PC-3 (cell line): ENCODE measurements at regions of chr3 and their contacts with region 1.

Region 1: DNA sequence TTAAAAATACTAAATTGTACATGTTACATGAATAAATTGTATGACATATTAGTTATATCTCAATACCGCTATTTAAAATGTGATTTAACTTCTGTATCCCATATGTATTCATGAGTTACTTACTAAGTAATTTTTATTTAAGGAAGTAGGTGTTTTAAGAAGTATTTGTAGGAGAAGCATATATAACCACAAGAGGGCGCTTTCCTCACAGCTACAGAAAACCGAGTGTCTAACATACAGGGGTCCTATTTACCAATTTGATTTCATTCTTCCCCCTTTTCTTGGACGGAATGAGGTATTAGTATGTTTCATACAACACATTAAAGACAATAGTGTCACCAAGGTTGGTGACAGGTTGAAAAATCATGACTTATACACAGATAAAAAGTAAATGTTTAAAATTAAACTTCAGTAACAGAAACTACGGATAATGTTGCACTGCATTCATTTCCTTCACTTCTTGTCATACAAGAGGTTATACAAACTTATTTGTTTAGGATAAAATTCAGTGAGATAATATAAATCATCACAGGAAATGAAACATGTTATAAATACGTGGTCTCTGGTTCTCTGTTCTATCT is 253.6 kb downstream of the MAGI1 start:
- DNase-seq: peak; percentile 41
- ATAC-seq: no peak
- H3K4me3 ChIP-seq: no peak overlapping the region
- H3K27ac ChIP-seq: no peak overlapping the region
- H3K4me1 ChIP-seq: no peaks in the 10 kb centered on the region
- H3K27me3 ChIP-seq: no peaks in the 10 kb centered on the region
- CTCF ChIP-seq: peak; percentile 68

Region 2: DNA sequence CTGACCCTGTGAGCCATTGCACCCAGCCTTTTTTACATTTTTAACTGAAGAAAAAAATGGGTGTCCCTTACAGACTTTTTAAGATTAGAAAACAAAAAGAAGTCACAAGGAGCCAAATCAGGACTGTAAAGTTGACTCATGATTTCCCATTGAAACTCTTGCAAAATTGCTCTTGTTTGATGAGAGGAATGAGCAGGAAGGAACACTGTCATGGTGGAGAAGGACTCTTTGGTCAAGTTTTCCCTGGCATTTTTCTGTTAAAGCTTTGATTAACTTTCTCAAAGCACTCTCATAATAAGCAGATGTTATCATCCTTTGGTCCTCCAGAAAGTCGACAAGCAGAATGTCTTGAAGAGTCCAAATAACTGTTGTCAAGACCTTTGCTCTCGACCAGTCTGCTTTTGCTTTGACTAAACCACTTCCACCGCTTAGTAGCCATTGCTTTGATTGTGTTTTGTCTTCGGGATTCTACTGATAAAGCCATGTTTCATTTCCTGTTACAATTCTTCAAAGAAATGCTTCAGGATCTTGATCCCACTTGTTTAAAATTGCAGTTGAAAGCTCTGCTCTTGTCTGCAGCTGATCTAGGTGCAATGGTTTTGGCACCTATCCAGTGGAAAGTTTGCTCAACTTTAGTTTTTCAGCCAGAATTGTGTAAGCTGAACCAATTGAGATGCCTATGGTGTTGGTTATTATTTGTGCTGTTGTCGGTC is 115.8 kb before region 1 on chr3:
- CTCF ChIA-PET with region 1: no interaction called
- POLR2A ChIA-PET with region 1: no interaction called
- intact Hi-C with region 1: no loop called
- DNase-seq: no peak
- ATAC-seq: no peak
- H3K4me3 ChIP-seq: no peak overlapping the region
- H3K27ac ChIP-seq: no peak overlapping the region
- H3K4me1 ChIP-seq: peaks cover 13% of the 10 kb centered on the region; the same call in 1 of the 2 replicates
- H3K27me3 ChIP-seq: no peaks in the 10 kb centered on the region
- CTCF ChIP-seq: no peak

Region 3: DNA sequence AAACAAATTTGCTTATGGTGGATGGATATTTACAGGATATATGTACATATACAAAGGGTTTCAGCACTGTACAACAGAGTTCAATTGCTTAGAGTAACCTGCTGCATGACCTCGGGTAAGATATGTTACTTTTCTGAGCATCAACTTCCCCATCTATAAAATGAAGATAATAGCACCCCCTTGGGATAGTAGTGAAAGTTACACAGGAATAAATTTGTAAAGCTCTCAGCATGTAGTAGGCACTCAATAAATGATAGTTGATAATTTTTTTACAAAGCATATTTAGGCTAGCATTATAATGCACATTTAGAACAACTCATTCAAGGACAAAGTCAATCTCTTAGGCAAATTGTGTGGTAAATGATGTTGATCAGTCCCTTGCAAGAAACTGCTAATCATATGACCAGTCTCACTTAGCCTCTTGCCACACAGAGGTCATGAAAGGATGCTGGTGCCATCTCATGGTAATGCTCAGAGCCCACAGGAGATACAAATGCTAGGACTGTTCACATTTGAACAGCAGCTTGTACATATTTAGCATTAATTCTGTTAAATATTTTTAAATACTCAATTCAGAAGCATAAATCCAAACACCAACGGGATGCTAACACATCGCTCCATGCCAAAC is 129.7 kb after region 1 on chr3:
- CTCF ChIA-PET with region 1: no interaction called
- POLR2A ChIA-PET with region 1: no interaction called
- intact Hi-C with region 1: loop called (anchors 5 kb)
- DNase-seq: peak; percentile 2
- ATAC-seq: no peak
- H3K4me3 ChIP-seq: no peak overlapping the region
- H3K27ac ChIP-seq: no peak overlapping the region
- H3K4me1 ChIP-seq: no peaks in the 10 kb centered on the region
- H3K27me3 ChIP-seq: no peaks in the 10 kb centered on the region
- CTCF ChIP-seq: peak; percentile 37

Region 4: DNA sequence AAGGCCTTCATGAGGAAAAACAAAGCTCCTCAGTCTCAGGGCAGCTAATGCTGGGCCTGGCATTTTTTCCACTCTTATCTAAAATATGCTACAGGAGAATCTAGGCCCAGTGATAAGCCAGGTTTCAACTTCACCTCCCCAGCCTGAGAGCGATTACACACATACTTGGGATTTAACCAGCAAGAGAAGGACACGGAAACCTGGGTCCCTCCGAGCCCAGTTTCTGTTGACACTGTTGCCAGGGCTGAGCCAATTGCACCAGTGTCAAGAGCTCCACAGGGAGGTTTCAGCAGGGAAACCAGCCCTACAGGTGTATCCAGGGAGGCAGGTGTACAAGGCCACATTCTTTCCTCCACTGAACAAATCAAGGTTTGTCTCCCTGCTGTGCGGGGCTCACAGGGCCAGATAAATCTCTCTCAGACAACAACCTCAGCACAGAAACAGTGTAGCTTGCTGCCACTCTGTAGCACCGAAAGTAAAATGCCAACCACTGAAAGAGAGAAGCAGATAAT is 168.2 kb after region 1 on chr3:
- CTCF ChIA-PET with region 1: no interaction called
- POLR2A ChIA-PET with region 1: no interaction called
- intact Hi-C with region 1: loop called (anchors 5 kb)
- DNase-seq: peak; percentile 77
- ATAC-seq: peak; percentile 33
- H3K4me3 ChIP-seq: peak overlapping the region; percentile 30; the same call in 1 of the 2 replicates
- H3K27ac ChIP-seq: peak overlapping the region; percentile 90
- H3K4me1 ChIP-seq: peaks cover 58% of the 10 kb centered on the region
- H3K27me3 ChIP-seq: no peaks in the 10 kb centered on the region
- CTCF ChIP-seq: no peak

Region 5: GRCh38 chr3:66038726-66039589 is 253.8 kb after region 1 on chr3 and contains the start of gene MAGI1:
- CTCF ChIA-PET with region 1: no interaction called
- POLR2A ChIA-PET with region 1: no interaction called
- intact Hi-C with region 1: loop called (anchors 5 kb)
- DNase-seq: peak; percentile 85
- ATAC-seq: peak; percentile 83
- H3K4me3 ChIP-seq: peak within 1 kb of the TSS; percentile 84
- H3K27ac ChIP-seq: peak within 1 kb of the TSS; percentile 67
- H3K4me1 ChIP-seq: peaks cover 6% of the 10 kb centered on the region; the same call in 1 of the 2 replicates
- H3K27me3 ChIP-seq: no peaks in the 10 kb centered on the region
- CTCF ChIP-seq: no peak
- total RNA-seq, gene MAGI1: 8.9 and 12.7 TPM in 2 replicates

Region 6: DNA sequence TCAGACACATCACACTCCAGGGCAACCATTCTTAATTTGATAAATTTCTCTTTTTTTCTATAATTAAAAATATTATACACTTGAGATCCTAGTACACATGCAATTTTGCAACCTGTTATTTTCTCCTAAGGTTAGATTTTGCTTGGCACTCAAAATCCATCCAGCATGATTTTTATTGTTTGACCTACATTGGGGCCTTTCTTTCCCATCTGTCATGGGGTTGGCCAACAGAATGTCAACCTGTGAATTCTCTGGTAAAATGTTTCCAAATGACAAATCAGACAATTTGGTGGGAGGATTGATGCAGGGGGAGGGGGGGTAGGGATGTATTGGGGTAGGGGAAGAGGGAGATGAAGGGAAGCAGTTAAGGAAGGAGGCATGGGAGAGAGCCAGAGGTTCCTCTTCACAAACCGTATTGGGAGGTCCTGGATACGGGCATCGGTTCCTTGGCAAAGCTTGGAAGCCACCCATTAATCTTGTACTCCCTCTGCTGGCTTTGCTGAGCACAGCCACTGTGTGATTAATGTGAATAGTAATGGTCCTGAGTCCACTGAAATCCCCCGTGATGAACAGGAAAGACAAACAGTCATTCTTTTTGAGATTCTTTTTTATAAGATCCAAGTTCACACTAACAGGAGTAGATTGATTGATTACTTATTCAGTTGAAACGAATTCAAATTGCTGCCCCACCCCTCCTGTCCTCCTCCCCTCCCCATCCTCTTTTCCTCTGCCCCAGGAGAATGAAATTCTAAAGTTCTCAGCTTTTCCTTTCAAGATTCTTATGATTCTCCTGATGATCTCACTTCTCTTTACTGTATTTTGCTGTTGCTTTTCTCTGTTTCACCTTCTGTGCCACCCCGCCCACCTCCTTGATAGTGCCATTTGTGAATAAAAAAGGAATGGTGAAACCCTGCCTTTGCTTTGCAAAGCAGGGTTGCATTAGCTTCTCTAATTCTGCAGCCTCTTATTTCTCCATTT is 353.5 kb after region 1 on chr3:
- CTCF ChIA-PET with region 1: no interaction called
- POLR2A ChIA-PET with region 1: no interaction called
- intact Hi-C with region 1: loop called (anchors 1 kb)
- DNase-seq: peak; percentile 68
- ATAC-seq: peak; percentile 81
- H3K4me3 ChIP-seq: no peak overlapping the region
- H3K27ac ChIP-seq: no peak overlapping the region
- H3K4me1 ChIP-seq: peaks cover 2% of the 10 kb centered on the region
- H3K27me3 ChIP-seq: no peaks in the 10 kb centered on the region
- CTCF ChIP-seq: peak; percentile 66

Region 7: GRCh38 chr3:66195347-66195783 is 410.2 kb after region 1 on chr3:
- CTCF ChIA-PET with region 1: no interaction called
- POLR2A ChIA-PET with region 1: no interaction called
- intact Hi-C with region 1: loop called (anchors 5 kb)
- DNase-seq: peak; percentile 46
- ATAC-seq: peak; percentile 96
- H3K4me3 ChIP-seq: peak overlapping the region; percentile 64
- H3K27ac ChIP-seq: no peak overlapping the region
- H3K4me1 ChIP-seq: no peaks in the 10 kb centered on the region
- H3K27me3 ChIP-seq: no peaks in the 10 kb centered on the region
- CTCF ChIP-seq: no peak; the same call in 1 of the 2 replicates